Sciatic nerve (tissue), 2 donors: ENCODE measurements at regions of chr18 and their contacts with region 1.

Region 1: GRCh38 chr18:13629841-13630715 is 96.3 kb downstream of the FAM210A start:
- DNase-seq: no peak
- ATAC-seq: peak; percentile 94

Region 2: DNA sequence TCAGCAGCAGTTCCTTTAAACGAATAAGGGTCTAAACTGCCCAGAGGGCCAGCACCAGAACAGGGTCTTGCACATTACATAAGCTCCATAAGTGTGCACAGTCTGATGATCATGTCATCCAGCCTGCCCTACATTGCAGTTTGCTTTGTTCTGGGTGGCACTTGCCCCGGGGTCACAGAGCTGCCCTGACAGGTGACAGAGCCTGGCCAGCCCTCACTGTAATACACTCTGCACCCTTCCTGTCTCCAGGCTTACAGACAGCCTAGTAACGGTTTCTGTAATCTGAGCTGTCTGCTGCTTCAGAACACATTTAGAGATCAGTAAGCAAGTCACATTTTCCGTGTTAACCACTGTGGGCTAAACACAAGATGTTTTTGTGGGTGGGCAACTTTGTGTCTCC is 117.1 kb before region 1 on chr18:
- intact Hi-C with region 1: no loop called
- DNase-seq: no peak
- ATAC-seq: peak; percentile 41

Region 3: DNA sequence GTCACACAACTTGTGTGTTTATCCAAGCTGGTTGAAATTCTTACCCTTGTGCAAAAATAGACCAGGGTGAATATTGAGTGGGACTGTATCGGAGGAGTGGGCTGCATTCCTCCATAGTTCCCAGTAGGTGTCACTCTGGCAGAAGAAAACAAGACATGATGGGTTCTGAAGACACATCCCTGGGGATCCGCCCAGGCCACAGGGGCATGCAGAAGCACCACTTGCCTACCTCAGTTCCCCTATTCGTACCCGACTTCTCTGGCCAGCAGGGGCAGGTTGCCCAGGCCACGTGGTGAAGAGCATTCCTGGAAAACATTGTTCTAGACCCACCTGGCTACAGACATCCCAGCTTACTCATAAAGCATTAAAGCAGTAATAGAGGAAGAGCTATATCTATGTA is 72.0 kb before region 1 on chr18:
- intact Hi-C with region 1: loop called (anchors 5 kb)
- DNase-seq: no peak
- ATAC-seq: peak; percentile 74

Region 4: DNA sequence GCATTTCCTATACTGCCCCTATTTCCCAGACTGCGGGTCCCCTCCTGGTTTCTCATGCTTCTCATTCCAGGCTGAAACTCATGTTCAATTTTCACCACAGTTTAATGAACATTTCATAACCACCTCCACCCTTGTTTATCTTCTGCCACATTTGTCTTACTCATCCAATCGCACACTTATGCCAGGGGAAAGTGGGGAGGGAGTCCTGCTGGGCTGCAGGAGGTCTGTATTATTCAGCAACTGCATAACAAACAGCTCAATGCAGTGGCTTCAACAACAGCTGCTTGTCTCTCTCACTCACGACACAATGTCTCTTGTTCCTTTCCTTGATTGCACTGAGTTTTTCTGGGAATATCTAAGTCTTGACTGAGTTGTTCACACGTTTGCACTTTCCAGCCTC is 396.1 kb after region 1 on chr18:
- intact Hi-C with region 1: no loop called
- DNase-seq: no peak
- ATAC-seq: no peak